Natural killer cell (primary cell): ENCODE measurements at regions of chr5 and their contacts with region 1.

Region 1: DNA sequence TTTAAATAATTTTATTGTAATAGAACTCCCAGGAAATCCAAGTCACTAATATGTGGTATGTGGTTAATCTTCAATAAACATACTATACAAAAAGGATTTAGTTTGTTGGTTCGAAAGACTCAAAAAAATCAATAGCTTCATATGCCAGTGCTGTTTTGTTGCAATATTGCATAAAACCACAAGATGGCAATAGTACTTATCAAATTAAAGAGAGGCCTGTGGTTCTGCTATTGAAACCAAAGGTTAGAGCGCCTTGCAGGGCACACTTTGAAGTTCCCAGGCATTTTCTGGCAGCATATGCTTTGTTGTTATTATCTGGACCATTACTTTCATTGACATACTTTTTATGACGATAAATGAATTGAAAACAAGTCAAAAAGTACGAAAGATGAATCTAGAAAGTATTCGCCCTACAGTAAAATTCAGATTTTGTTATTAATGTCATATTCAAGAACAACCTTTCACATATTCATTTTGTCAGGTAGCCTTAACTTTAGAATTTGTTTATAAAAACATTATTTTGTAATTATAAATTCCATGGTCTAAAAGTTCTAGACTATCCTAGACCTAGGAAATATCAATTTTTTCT is 316.3 kb downstream of the MCTP1 start:
- DNase-seq: peak in 1 of 2 donors; percentile 58
- ATAC-seq: peak; percentile 64 to 73 (median 68)
- H3K4me3 ChIP-seq: no peak overlapping the region
- H3K4me3 Mint-ChIP-seq: no peak overlapping the region
- H3K27ac ChIP-seq: no peak overlapping the region
- H3K27ac Mint-ChIP-seq: no peak overlapping the region
- H3K4me1 ChIP-seq: no peaks in the 10 kb centered on the region
- H3K4me1 Mint-ChIP-seq: no peaks in the 10 kb centered on the region
- H3K27me3 ChIP-seq: no peaks in the 10 kb centered on the region
- H3K27me3 Mint-ChIP-seq: no peaks in the 10 kb centered on the region
- CTCF ChIP-seq: peak; percentile 72

Region 2: GRCh38 chr5:94893412-94894135 is 75.0 kb before region 1 on chr5:
- intact Hi-C with region 1: no loop called
- DNase-seq: no peak
- ATAC-seq: no peak
- H3K4me3 ChIP-seq: no peak overlapping the region
- H3K4me3 Mint-ChIP-seq: no peak overlapping the region
- H3K27ac ChIP-seq: no peak overlapping the region
- H3K27ac Mint-ChIP-seq: no peak overlapping the region
- H3K4me1 ChIP-seq: no peaks in the 10 kb centered on the region
- H3K4me1 Mint-ChIP-seq: no peaks in the 10 kb centered on the region
- H3K27me3 ChIP-seq: no peaks in the 10 kb centered on the region
- H3K27me3 Mint-ChIP-seq: no peaks in the 10 kb centered on the region
- CTCF ChIP-seq: no peak

Region 3: DNA sequence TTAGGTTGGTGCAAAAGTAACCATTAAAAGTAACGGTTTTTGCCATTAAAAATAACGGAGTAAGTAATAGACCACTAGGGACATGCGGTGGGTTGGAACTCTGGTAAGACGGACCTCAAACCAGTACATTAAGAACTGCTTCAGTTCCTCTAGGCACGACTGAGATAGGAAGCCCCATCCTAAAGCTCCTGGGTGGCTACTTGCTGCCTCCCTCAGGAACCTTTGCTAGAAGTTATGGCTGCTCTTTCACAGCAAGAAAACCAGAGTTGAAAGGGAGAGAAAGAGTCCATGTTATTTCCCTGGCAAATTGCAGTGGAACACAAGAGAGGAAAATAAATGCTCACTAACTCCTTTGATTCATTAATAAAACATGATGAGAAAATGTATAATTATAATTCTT is 268.7 kb after region 1 on chr5:
- intact Hi-C with region 1: loop called (anchors 2 kb)
- DNase-seq: no peak
- ATAC-seq: no peak
- H3K4me3 ChIP-seq: no peak overlapping the region
- H3K4me3 Mint-ChIP-seq: no peak overlapping the region
- H3K27ac ChIP-seq: no peak overlapping the region
- H3K27ac Mint-ChIP-seq: no peak overlapping the region
- H3K4me1 ChIP-seq: no peaks in the 10 kb centered on the region
- H3K4me1 Mint-ChIP-seq: no peaks in the 10 kb centered on the region
- H3K27me3 ChIP-seq: no peaks in the 10 kb centered on the region
- H3K27me3 Mint-ChIP-seq: no peaks in the 10 kb centered on the region
- CTCF ChIP-seq: no peak

Region 4: DNA sequence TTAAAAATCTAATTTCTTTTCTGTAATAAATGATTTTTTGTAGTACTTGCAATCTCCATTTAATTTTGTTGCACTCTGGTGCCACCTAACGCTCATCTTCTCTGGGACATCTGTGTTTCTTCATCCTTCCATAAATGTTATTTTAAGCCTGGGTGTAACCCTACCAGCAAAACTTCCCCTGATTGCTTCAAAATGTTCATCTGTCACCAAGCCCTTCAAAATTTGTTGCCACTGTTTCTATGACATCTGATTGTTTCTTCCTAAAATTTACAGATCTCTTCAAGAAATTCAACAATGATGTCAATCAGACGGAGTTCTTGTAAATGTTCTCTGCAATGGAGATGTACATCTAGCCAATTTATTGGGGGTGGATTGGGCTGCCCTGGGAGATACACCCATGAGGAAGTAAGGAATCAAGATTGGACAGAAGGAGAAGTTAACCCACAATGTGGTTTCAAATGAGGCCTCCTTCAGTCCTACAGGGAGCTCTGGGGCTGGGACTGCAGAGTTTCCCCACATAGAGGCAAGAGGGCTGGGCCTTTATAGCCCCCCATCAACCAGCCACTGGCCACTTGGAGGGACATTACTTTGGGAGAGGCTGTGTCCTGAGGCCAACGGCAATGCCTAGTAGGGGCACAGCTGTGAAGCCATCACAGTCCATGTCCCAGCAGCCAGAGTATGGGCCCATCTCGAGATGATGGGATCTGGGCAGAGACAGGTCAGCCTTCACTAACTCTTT is 293.0 kb after region 1 on chr5:
- intact Hi-C with region 1: loop called (anchors 10 kb)
- DNase-seq: peak in 1 of 2 donors; percentile 13
- ATAC-seq: peak in 2 of 3 donors; percentile 28 to 39
- H3K4me3 ChIP-seq: no peak overlapping the region
- H3K4me3 Mint-ChIP-seq: no peak overlapping the region
- H3K27ac ChIP-seq: no peak overlapping the region
- H3K27ac Mint-ChIP-seq: no peak overlapping the region
- H3K4me1 ChIP-seq: no peaks in the 10 kb centered on the region
- H3K4me1 Mint-ChIP-seq: no peaks in the 10 kb centered on the region
- H3K27me3 ChIP-seq: no peaks in the 10 kb centered on the region
- H3K27me3 Mint-ChIP-seq: peaks cover 0 to 9% of the 10 kb centered on the region in 2 donors
- CTCF ChIP-seq: no peak